Common myeloid progenitor, CD34-positive (primary cell): ENCODE measurements at regions of chr1 and their contacts with region 1.

Region 1: GRCh38 chr1:180168786-180169639 is 14.3 kb downstream of the QSOX1 start:
- DNase-seq: peak; percentile 29 to 60 (median 56)
- H3K4me3 ChIP-seq: no peak overlapping the region
- H3K27ac ChIP-seq: no peak overlapping the region
- H3K4me1 ChIP-seq: peaks cover 0 to 8% (median 1%) of the 10 kb centered on the region in 4 experiments
- H3K27me3 ChIP-seq: no peaks in the 10 kb centered on the region

Region 2: DNA sequence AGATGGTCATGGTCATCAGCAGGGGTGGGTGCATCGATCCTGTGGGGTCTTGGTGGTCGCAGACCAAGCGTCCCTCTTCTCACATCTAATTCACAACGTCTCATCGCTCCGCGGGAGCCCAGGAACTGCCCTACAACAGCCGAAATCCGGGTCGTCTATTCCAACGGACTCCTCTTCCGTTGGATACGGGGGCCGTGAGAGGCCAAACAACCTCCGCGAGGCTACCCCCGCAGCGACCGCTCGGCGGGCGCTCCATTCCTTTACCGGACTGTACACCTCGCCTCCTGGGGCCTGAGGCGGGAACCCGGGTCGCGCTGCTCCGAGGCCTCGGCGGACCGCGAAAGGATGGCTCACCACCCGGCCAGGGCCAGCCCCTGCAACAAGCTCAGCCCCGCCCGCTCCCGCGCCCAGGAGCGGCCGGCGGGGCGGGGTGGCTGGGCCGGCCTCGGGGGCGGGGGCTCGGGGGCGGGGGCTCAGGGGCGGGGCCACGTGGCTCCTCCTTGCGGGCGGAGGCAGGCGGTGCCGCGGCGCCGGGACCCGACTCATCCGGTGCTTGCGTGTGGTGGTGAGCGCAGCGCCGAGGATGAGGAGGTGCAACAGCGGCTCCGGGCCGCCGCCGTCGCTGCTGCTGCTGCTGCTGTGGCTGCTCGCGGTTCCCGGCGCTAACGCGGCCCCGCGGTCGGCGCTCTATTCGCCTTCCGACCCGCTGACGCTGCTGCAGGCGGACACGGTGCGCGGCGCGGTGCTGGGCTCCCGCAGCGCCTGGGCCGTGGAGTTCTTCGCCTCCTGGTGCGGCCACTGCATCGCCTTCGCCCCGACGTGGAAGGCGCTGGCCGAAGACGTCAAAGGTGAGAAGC is 14.5 kb before region 1 on chr1 and contains the start of gene QSOX1:
- CTCF ChIA-PET with region 1: interaction called, 56 read pairs
- POLR2A ChIA-PET with region 1: no interaction called
- DNase-seq: peak; percentile 87 to 95 (median 95)
- H3K4me3 ChIP-seq: peak within 1 kb of the TSS; percentile 69 to 91 (median 89)
- H3K27ac ChIP-seq: peak within 1 kb of the TSS; percentile 46 to 83
- H3K4me1 ChIP-seq: peaks cover 8 to 48% (median 24%) of the 10 kb centered on the region in 4 experiments
- H3K27me3 ChIP-seq: no peaks in the 10 kb centered on the region

Region 3: DNA sequence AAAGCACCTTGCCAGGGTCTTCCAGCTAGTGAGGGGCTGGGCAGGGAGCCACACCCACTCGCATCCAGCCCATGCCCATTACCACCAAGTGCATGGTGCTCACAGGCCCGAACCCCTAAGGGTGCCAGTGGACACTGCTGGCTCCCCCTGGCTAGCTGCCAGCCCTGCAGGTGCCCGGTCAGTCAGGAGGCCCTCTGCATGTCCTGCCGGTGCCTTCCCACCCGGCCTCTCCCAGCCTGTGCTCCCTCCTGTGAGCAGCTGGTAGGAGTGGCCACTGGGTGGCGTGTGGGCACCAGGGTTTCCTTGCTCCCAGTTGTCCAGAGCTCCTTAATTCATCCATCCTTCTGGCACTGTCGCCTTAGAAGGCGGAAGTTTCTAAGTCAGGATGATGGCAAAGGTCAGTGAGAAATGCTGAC is 19.1 kb after region 1 on chr1:
- CTCF ChIA-PET with region 1: interaction called, 97 read pairs
- POLR2A ChIA-PET with region 1: no interaction called
- DNase-seq: peak in 1 of 3 donors; percentile 10
- H3K4me3 ChIP-seq: no peak overlapping the region
- H3K27ac ChIP-seq: no peak overlapping the region
- H3K4me1 ChIP-seq: peaks cover 0 to 11% (median 1%) of the 10 kb centered on the region in 4 experiments
- H3K27me3 ChIP-seq: no peaks in the 10 kb centered on the region

Region 4: GRCh38 chr1:180415985-180416633 is 247.1 kb after region 1 on chr1:
- CTCF ChIA-PET with region 1: no interaction called
- POLR2A ChIA-PET with region 1: no interaction called
- DNase-seq: peak; percentile 32 to 61 (median 61)
- H3K4me3 ChIP-seq: no peak overlapping the region
- H3K27ac ChIP-seq: no peak overlapping the region
- H3K4me1 ChIP-seq: no peaks in the 10 kb centered on the region
- H3K27me3 ChIP-seq: no peaks in the 10 kb centered on the region